WTC11 (cell line): ENCODE measurements at regions of chr18 and their contacts with region 1.

Region 1: DNA sequence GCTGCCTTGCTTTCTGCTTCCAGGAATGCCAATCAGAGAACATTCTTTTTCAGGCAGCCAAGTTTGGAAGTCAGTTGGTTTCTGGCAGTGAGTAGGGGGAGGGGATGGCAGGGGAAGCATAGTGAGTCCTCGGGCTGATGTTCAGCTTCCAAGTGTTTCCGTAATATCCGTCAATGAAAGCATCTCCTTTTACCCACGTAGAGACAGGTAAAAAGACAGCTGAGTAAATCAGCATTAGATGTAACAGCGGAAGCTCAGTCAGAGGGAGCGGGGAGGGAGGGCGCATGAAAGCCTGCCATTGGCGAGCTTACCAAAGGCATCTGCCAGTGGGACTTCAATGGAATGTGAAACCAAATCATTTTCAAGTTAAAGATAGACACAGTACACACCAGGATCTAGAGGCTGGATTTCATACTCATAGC is 117.1 kb upstream of the DTNA start:
- DNase-seq: peak; percentile 43
- ATAC-seq: peak; percentile 87
- H3K4me3 Mint-ChIP-seq: peak overlapping the region; percentile 69
- H3K27ac Mint-ChIP-seq: peak overlapping the region; percentile 95
- H3K4me1 Mint-ChIP-seq: peaks cover 47% of the 10 kb centered on the region
- H3K27me3 Mint-ChIP-seq: no peaks in the 10 kb centered on the region
- CTCF ChIP-seq: no peak

Region 2: GRCh38 chr18:34576622-34577021 is 16.4 kb before region 1 on chr18:
- CTCF ChIA-PET with region 1: no interaction called
- POLR2A ChIA-PET with region 1: no interaction called
- DNase-seq: no peak
- ATAC-seq: peak; percentile 34; the same call in 1 of the 2 replicates
- H3K4me3 Mint-ChIP-seq: no peak overlapping the region
- H3K27ac Mint-ChIP-seq: no peak overlapping the region
- H3K4me1 Mint-ChIP-seq: no peaks in the 10 kb centered on the region
- H3K27me3 Mint-ChIP-seq: no peaks in the 10 kb centered on the region
- CTCF ChIP-seq: no peak

Region 3: DNA sequence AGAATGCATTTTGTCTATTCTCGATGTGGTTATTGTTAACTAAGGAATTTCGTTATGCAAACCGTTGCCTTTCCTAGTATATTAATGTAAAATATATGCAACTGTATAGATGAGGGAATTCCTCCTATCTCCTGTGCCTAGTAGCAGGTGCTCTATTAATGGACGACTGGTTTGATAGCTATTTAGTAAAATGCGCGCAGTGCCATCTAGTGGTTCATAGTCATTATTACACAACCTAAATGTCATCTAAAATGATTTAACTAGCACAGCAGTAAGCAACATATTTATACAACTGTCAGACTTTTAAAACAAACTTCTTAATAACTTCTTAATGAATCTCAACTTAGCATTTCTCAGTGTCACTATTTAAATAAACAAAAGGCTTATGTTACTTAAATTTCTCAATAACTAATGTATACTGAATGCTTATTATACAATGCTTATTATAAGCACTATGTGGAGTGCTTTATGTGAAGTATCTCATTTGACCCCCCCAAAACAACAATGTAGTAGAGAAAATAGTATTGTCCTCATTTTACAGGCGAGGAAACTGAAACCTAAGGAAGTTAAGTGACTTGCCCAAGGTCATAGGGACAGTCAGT is 195.1 kb after region 1 on chr18:
- CTCF ChIA-PET with region 1: interaction called, 10 read pairs
- POLR2A ChIA-PET with region 1: no interaction called
- DNase-seq: no peak
- ATAC-seq: peak; percentile 77
- H3K4me3 Mint-ChIP-seq: no peak overlapping the region
- H3K27ac Mint-ChIP-seq: no peak overlapping the region
- H3K4me1 Mint-ChIP-seq: peaks cover 19% of the 10 kb centered on the region
- H3K27me3 Mint-ChIP-seq: no peaks in the 10 kb centered on the region
- CTCF ChIP-seq: peak; percentile 64